CD4-positive, alpha-beta T cell (primary cell): ENCODE measurements at regions of chr17 and their contacts with region 1.

Region 1: GRCh38 chr17:35540589-35541404 is 3.3 kb upstream of the SLFN12L start:
- DNase-seq: peak in 7 of 14 experiments; percentile 21 to 83 (median 59)
- ATAC-seq: peak; percentile 47
- H3K4me3 ChIP-seq: peak overlapping the region; percentile 56
- H3K4me3 Mint-ChIP-seq: peak overlapping the region; percentile 93
- H3K27ac ChIP-seq: peak overlapping the region; percentile 67 to 85
- H3K27ac Mint-ChIP-seq: peak overlapping the region; percentile 82
- H3K4me1 ChIP-seq: peaks cover 23% of the 10 kb centered on the region
- H3K4me1 Mint-ChIP-seq: peaks cover 60% of the 10 kb centered on the region
- H3K27me3 ChIP-seq: no peaks in the 10 kb centered on the region
- H3K27me3 Mint-ChIP-seq: no peaks in the 10 kb centered on the region
- CTCF ChIP-seq: no peak

Region 2: GRCh38 chr17:34420254-34420766 is 1120.5 kb before region 1 on chr17:
- CTCF ChIA-PET with region 1: no interaction called
- POLR2A ChIA-PET with region 1: no interaction called
- intact Hi-C with region 1: loop called in 1 of 2 experiments (anchors 10 kb)
- DNase-seq: peak; percentile 46 to 77 (median 52)
- ATAC-seq: peak; percentile 51
- H3K4me3 ChIP-seq: no peak overlapping the region
- H3K4me3 Mint-ChIP-seq: no peak overlapping the region
- H3K27ac ChIP-seq: no peak overlapping the region
- H3K27ac Mint-ChIP-seq: no peak overlapping the region
- H3K4me1 ChIP-seq: peaks cover 7% of the 10 kb centered on the region
- H3K4me1 Mint-ChIP-seq: no peaks in the 10 kb centered on the region
- H3K27me3 ChIP-seq: peaks cover 18 to 27% of the 10 kb centered on the region in 2 experiments
- H3K27me3 Mint-ChIP-seq: peaks cover 46% of the 10 kb centered on the region
- CTCF ChIP-seq: peak; percentile 98

Region 3: DNA sequence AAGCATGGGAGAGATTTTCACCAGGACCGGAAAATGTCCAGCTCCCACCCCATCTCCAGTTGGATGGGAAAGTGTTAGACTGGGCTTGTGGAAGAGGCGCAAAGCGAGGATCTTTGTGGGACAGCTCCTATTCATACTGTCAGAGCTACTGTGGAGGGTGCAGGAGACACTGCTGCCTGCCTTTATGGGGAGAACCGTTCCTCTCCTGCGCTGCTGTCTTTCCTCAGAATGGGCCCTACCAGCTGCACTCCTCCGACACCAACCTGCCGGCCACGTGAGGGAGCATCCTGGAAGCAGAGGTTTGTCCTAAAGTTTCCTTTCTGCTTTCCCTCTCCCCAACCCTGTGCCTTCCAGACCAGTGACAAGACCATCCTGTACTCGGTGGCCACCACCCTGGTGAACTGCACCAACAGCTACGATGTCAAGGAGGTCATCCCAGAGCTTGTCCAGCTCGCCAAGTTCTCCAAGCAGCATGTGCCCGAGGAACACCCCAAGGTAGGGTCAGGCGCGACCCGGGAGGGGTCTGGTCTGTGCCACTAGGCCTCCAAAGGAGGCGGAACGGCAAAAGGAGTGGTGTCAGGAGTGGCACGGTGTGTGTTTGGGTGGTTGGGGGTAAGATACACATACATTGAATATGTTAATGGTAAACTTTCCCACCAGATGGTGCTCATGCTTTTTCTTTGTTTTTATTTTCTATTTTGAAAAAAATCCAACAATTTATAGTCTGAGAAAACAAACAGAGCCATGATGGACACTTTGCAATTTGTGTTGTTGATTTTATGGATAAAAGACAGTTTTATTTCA is 369.6 kb before region 1 on chr17:
- CTCF ChIA-PET with region 1: interaction called, 8 read pairs
- POLR2A ChIA-PET with region 1: interaction called, 4 read pairs
- intact Hi-C with region 1: loop called in 1 of 2 experiments (anchors 1 kb)
- DNase-seq: peak in 9 of 14 experiments; percentile 13 to 80 (median 42)
- ATAC-seq: peak; percentile 79
- H3K4me3 ChIP-seq: no peak overlapping the region
- H3K4me3 Mint-ChIP-seq: peak overlapping the region; percentile 80
- H3K27ac ChIP-seq: no peak overlapping the region
- H3K27ac Mint-ChIP-seq: peak overlapping the region; percentile 92
- H3K4me1 ChIP-seq: peaks cover 40% of the 10 kb centered on the region
- H3K4me1 Mint-ChIP-seq: peaks cover 52% of the 10 kb centered on the region
- H3K27me3 ChIP-seq: no peaks in the 10 kb centered on the region
- H3K27me3 Mint-ChIP-seq: no peaks in the 10 kb centered on the region
- CTCF ChIP-seq: peak; percentile 68

Region 4: DNA sequence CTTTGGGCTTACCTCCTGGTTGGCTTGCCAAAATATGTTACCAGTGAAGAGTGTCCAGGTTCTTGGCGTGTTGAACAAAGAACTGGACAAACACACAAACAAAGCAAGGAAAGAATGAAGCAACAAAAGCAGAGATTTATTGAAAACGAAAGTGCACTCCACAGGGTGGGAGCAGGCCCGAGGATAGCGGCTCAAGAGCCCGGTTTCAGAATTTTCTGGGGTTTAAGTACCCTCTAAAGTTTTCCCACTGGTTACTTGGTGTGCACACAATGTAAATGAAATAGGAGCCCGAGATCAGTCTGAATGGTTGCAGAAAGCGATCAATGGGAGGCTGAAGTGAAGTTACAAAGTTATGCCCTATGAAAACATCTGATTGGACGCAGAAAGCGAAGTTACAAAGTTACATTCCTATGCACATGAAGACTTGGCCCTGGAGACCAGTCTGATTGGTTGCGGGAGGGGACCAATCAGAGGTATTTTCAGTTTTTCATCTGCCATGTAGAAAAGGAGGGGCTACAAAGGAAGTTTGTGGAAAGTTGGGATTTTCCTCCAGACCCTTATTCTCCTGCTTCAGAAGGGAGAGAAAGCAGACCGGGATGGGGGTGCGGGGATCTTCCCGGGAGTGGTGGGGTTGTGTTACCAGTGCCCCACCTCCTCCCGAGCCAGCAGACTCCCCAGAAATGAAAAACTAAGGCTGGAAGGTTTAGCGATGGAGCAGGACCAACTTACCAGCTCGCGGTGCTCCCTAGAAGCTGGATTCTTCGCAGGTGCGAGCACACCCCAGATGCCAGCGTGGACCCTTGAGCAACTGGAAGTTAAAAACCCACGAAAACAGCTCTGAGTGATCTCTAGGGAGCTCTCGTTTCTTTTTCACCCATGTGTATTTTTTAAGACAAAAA is 108.4 kb before region 1 on chr17 and contains the start of gene SLFN12:
- CTCF ChIA-PET with region 1: no interaction called
- POLR2A ChIA-PET with region 1: no interaction called
- intact Hi-C with region 1: loop called in 1 of 2 experiments (anchors 2 kb)
- DNase-seq: peak in 13 of 14 experiments; percentile 5 to 87 (median 35)
- ATAC-seq: peak; percentile 92
- H3K4me3 ChIP-seq: peak within 1 kb of the TSS; percentile 88
- H3K4me3 Mint-ChIP-seq: peak within 1 kb of the TSS; percentile 99
- H3K27ac ChIP-seq: peak within 1 kb of the TSS; percentile 51 to 57
- H3K27ac Mint-ChIP-seq: peak within 1 kb of the TSS; percentile 85
- H3K4me1 ChIP-seq: peaks cover 38% of the 10 kb centered on the region
- H3K4me1 Mint-ChIP-seq: peaks cover 51% of the 10 kb centered on the region
- H3K27me3 ChIP-seq: no peaks in the 10 kb centered on the region
- H3K27me3 Mint-ChIP-seq: no peaks in the 10 kb centered on the region
- CTCF ChIP-seq: no peak
- total RNA-seq, gene SLFN12: 1.3 to 2.4 TPM

Region 5: GRCh38 chr17:35578197-35578928 is 37.6 kb after region 1 on chr17 and contains the start of gene PEX12:
- CTCF ChIA-PET with region 1: interaction called, 8 read pairs
- POLR2A ChIA-PET with region 1: interaction called, 35 read pairs
- intact Hi-C with region 1: no loop called
- DNase-seq: peak; percentile 77 to 96 (median 86)
- ATAC-seq: peak; percentile 96
- H3K4me3 ChIP-seq: peak within 1 kb of the TSS; percentile 85
- H3K4me3 Mint-ChIP-seq: peak within 1 kb of the TSS; percentile 92
- H3K27ac ChIP-seq: peak within 1 kb of the TSS; percentile 90 to 93
- H3K27ac Mint-ChIP-seq: peak within 1 kb of the TSS; percentile 97
- H3K4me1 ChIP-seq: peaks cover 21% of the 10 kb centered on the region
- H3K4me1 Mint-ChIP-seq: peaks cover 42% of the 10 kb centered on the region
- H3K27me3 ChIP-seq: no peaks in the 10 kb centered on the region
- H3K27me3 Mint-ChIP-seq: no peaks in the 10 kb centered on the region
- CTCF ChIP-seq: no peak
- total RNA-seq, gene PEX12: 3.0 to 3.2 TPM

Region 6: GRCh38 chr17:35596530-35597233 is 55.9 kb after region 1 on chr17:
- CTCF ChIA-PET with region 1: no interaction called
- POLR2A ChIA-PET with region 1: no interaction called
- intact Hi-C with region 1: no loop called
- DNase-seq: peak in 1 of 14 experiments; percentile 23
- ATAC-seq: no peak
- H3K4me3 ChIP-seq: no peak overlapping the region
- H3K4me3 Mint-ChIP-seq: no peak overlapping the region
- H3K27ac ChIP-seq: no peak overlapping the region
- H3K27ac Mint-ChIP-seq: no peak overlapping the region
- H3K4me1 ChIP-seq: no peaks in the 10 kb centered on the region
- H3K4me1 Mint-ChIP-seq: peaks cover 4% of the 10 kb centered on the region
- H3K27me3 ChIP-seq: no peaks in the 10 kb centered on the region
- H3K27me3 Mint-ChIP-seq: no peaks in the 10 kb centered on the region
- CTCF ChIP-seq: no peak

Region 7: GRCh38 chr17:35731239-35731931 is 190.6 kb after region 1 on chr17 and contains the start of gene RASL10B:
- CTCF ChIA-PET with region 1: no interaction called
- POLR2A ChIA-PET with region 1: no interaction called
- intact Hi-C with region 1: no loop called
- DNase-seq: peak in 12 of 14 experiments; percentile 29 to 67 (median 46)
- ATAC-seq: peak; percentile 90
- H3K4me3 ChIP-seq: peak within 1 kb of the TSS; percentile 49
- H3K4me3 Mint-ChIP-seq: peak within 1 kb of the TSS; percentile 88
- H3K27ac ChIP-seq: no peak within 1 kb of the TSS
- H3K27ac Mint-ChIP-seq: peak within 1 kb of the TSS; percentile 8
- H3K4me1 ChIP-seq: peaks cover 16% of the 10 kb centered on the region
- H3K4me1 Mint-ChIP-seq: peaks cover 28% of the 10 kb centered on the region
- H3K27me3 ChIP-seq: no peaks in the 10 kb centered on the region
- H3K27me3 Mint-ChIP-seq: no peaks in the 10 kb centered on the region
- CTCF ChIP-seq: no peak
- total RNA-seq, gene RASL10B: 0.22 to 0.47 TPM